OCI-LY7 (cell line): ENCODE measurements at regions of chr2 and their contacts with region 1.

Region 1: GRCh38 chr2:3399829-3400228 is 20.3 kb downstream of the TRAPPC12 start:
- DNase-seq: no peak
- H3K4me3 ChIP-seq: no peak overlapping the region
- H3K27ac ChIP-seq: no peak overlapping the region
- H3K4me1 ChIP-seq: peaks cover 15% of the 10 kb centered on the region
- CTCF ChIP-seq: no peak

Region 2: GRCh38 chr2:3107567-3107966 is 292.3 kb before region 1 on chr2:
- CTCF ChIA-PET with region 1: no interaction called
- POLR2A ChIA-PET with region 1: no interaction called
- intact Hi-C with region 1: no loop called
- DNase-seq: no peak
- H3K4me3 ChIP-seq: no peak overlapping the region
- H3K27ac ChIP-seq: no peak overlapping the region
- H3K4me1 ChIP-seq: no peaks in the 10 kb centered on the region
- CTCF ChIP-seq: 0 out of 2 replicates have a peak, but pooled peaks have one; percentile 14

Region 3: DNA sequence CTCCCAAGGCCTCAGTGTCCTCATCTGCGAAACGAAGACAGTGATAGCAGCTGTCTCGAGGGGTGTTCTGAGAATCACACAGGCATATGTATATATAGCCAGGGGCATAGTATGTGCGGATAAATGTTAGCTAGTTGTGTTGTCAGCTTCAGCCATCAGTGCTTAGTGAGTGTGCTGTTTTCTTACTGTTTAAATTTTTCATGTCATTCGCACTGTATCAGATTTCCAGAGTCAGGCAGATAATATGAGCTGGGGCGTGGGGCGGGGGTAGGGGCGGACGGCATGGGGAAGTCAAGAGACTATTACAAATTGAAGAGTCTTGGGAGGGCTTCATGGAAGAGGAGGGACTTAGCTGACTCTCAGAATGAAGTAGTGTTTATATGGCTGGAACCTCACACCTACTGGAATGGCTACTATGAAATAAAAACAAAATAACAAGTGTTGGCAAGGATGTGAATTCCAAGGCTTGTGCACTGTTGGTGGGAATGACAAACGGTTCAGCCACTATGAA is 13.3 kb before region 1 on chr2:
- CTCF ChIA-PET with region 1: no interaction called
- POLR2A ChIA-PET with region 1: interaction called, 15 read pairs
- intact Hi-C with region 1: no loop called
- DNase-seq: no peak
- H3K4me3 ChIP-seq: no peak overlapping the region
- H3K27ac ChIP-seq: no peak overlapping the region
- H3K4me1 ChIP-seq: no peaks in the 10 kb centered on the region
- CTCF ChIP-seq: no peak